ENCODE measurements at regions of chrX and their contacts with region 1.

Region 1: GRCh38 chrX:154436983-154437719 is at the start of gene GDI1:
- DNase-seq: peak; percentile 60 to 82 (median 68)
- ATAC-seq: peak in 3 of 4 donors; percentile 36 to 66 (median 48)
- H3K4me3 ChIP-seq: peak within 1 kb of the TSS; percentile 60 to 96 (median 78)
- H3K27ac ChIP-seq: peak within 1 kb of the TSS; percentile 83 to 96 (median 87)
- H3K4me1 ChIP-seq: peaks cover 0 to 16% (median 4%) of the 10 kb centered on the region in 12 donors
- H3K27me3 ChIP-seq: no peaks in the 10 kb centered on the region
- CTCF ChIP-seq: no peak
- POLR2A ChIP-seq: peak in 1 of 2 donors; percentile 41
- total RNA-seq, gene GDI1: 73.6 to 105 (median 92.2) TPM

Region 2: GRCh38 chrX:154378782-154379591 is 58.2 kb before region 1 on chrX and contains the start of gene EMD:
- intact Hi-C with region 1: loop called in 1 of 10 experiments (anchors 10 kb)
- DNase-seq: peak; percentile 96 to 99 (median 98)
- ATAC-seq: peak; percentile 90 to 93 (median 93)
- H3K4me3 ChIP-seq: peak within 1 kb of the TSS; percentile 67 to 97 (median 82)
- H3K27ac ChIP-seq: peak within 1 kb of the TSS; percentile 95 to 100 (median 98)
- H3K4me1 ChIP-seq: peaks cover 0 to 29% (median 11%) of the 10 kb centered on the region in 12 donors
- H3K27me3 ChIP-seq: no peaks in the 10 kb centered on the region
- CTCF ChIP-seq: no peak
- POLR2A ChIP-seq: peak; percentile 4 to 82
- total RNA-seq, gene EMD: 37.6 to 76.8 (median 52.8) TPM

Region 3: GRCh38 chrX:154397819-154398724 is 39.1 kb before region 1 on chrX and contains the start of gene RPL10:
- intact Hi-C with region 1: loop called in 1 of 10 experiments (anchors 5 kb)
- DNase-seq: peak; percentile 92 to 97 (median 96)
- ATAC-seq: peak; percentile 87 to 97 (median 92)
- H3K4me3 ChIP-seq: peak within 1 kb of the TSS; percentile 67 to 99 (median 86)
- H3K27ac ChIP-seq: peak within 1 kb of the TSS; percentile 98 to 100 (median 98)
- H3K4me1 ChIP-seq: peaks cover 0 to 16% (median 10%) of the 10 kb centered on the region in 12 donors
- H3K27me3 ChIP-seq: no peaks in the 10 kb centered on the region
- CTCF ChIP-seq: no peak
- POLR2A ChIP-seq: peak in 1 of 2 donors; percentile 91
- total RNA-seq, gene RPL10: 1,381 to 3,072 (median 2,052) TPM

Region 4: DNA sequence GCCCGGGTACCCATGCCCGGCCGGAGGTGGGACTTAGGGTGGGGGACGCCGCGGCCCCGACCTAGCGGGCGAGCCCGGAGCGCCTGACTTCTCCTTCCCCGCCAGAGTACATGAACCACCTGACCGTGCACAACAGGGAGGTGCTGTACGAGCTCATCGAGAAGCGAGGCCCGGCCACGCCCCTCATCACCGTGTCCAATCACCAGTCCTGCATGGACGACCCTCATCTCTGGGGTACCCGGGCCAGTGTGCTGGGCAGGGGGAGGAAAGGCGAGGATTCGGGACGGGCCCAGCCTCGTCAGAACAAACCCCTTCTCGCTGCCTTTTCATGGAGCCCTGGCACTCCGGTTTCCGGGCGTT is 25.2 kb before region 1 on chrX:
- intact Hi-C with region 1: loop called in 1 of 10 experiments (anchors 2 kb)
- DNase-seq: peak; percentile 57 to 77 (median 71)
- ATAC-seq: peak; percentile 64 to 81 (median 79)
- H3K4me3 ChIP-seq: peak overlapping the region; percentile 51 to 97 (median 80)
- H3K27ac ChIP-seq: peak overlapping the region; percentile 92 to 99 (median 96)
- H3K4me1 ChIP-seq: peaks cover 0 to 28% (median 8%) of the 10 kb centered on the region in 12 donors
- H3K27me3 ChIP-seq: no peaks in the 10 kb centered on the region
- CTCF ChIP-seq: no peak
- POLR2A ChIP-seq: peak in 1 of 2 donors; percentile 7

Region 5: DNA sequence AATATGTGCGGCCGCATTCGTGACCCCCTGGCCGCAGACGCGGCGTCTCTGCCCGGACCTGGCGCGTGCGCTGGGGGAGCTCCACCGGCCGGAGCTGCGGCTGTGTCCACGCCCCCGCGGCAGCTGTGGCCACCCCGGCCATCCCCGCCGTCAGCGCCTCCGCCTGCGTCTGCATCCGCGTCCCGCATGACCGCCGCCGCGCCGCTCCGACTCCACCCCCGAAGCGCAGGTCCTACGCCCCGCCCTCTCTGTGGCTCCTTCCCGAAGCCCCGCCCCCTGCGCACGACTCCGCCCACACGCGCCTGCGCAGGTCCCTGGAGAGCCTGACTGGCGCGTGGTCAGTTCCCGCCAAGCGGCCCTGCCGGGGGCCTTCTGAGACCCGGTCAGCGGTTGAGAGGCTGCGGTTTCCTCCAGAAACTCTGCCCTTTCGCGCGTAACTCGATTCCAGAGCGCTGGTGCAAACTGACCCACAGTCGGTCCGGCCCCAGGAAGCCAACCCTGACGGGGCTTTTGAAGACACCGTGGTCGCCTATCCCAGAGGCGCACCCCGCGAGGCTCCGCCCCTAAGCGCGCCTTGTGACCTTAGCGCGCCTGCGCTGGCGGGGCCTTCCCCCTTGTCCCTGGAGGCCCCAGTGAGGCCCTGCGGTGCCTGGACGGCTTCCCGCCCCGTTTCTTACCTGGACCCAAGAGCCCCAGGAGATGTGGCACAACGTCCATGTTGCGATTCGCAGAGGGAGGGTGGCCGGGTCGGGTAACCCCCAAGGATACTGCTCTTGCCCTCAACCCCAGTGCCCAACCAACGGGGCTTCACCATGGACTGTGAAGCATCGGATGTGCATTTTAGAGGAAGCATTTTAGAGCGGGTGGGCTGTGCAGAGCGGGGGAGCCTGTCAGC is 41.8 kb after region 1 on chrX and contains the start of gene LAGE3:
- intact Hi-C with region 1: loop called in 2 of 10 experiments (anchors 5 kb)
- DNase-seq: peak; percentile 93 to 95 (median 94)
- ATAC-seq: peak; percentile 91 to 97 (median 94)
- H3K4me3 ChIP-seq: peak within 1 kb of the TSS; percentile 23 to 67 (median 58)
- H3K27ac ChIP-seq: peak within 1 kb of the TSS in 11 of 12 donors; percentile 69 to 88 (median 84)
- H3K4me1 ChIP-seq: peaks cover 0 to 17% (median 1%) of the 10 kb centered on the region in 12 donors
- H3K27me3 ChIP-seq: no peaks in the 10 kb centered on the region
- CTCF ChIP-seq: no peak
- POLR2A ChIP-seq: peak in 1 of 2 donors; percentile 65
- total RNA-seq, gene LAGE3: 16.2 to 23.6 (median 18.9) TPM

Region 6: GRCh38 chrX:154515878-154516655 is 78.9 kb after region 1 on chrX and contains the start of gene FAM3A:
- intact Hi-C with region 1: loop called in 1 of 10 experiments (anchors 5 kb)
- DNase-seq: peak; percentile 94 to 97 (median 95)
- ATAC-seq: peak; percentile 94 to 97 (median 97)
- H3K4me3 ChIP-seq: peak within 1 kb of the TSS; percentile 59 to 97 (median 76)
- H3K27ac ChIP-seq: peak within 1 kb of the TSS; percentile 89 to 98 (median 93)
- H3K4me1 ChIP-seq: peaks cover 0 to 28% (median 10%) of the 10 kb centered on the region in 12 donors
- H3K27me3 ChIP-seq: peaks cover 0 to 5% (median 0%) of the 10 kb centered on the region in 9 donors
- CTCF ChIP-seq: no peak
- POLR2A ChIP-seq: peak; percentile 82 to 94
- total RNA-seq, gene FAM3A: 36.2 to 82.6 (median 48.6) TPM

Measured in heart left ventricle (tissue), 16 donors.